Activated B cell treated with CpG ODN at 0.5 μM for 24 hours (primary cell): ENCODE measurements at regions of chr14 and their contacts with region 1.

Region 1: DNA sequence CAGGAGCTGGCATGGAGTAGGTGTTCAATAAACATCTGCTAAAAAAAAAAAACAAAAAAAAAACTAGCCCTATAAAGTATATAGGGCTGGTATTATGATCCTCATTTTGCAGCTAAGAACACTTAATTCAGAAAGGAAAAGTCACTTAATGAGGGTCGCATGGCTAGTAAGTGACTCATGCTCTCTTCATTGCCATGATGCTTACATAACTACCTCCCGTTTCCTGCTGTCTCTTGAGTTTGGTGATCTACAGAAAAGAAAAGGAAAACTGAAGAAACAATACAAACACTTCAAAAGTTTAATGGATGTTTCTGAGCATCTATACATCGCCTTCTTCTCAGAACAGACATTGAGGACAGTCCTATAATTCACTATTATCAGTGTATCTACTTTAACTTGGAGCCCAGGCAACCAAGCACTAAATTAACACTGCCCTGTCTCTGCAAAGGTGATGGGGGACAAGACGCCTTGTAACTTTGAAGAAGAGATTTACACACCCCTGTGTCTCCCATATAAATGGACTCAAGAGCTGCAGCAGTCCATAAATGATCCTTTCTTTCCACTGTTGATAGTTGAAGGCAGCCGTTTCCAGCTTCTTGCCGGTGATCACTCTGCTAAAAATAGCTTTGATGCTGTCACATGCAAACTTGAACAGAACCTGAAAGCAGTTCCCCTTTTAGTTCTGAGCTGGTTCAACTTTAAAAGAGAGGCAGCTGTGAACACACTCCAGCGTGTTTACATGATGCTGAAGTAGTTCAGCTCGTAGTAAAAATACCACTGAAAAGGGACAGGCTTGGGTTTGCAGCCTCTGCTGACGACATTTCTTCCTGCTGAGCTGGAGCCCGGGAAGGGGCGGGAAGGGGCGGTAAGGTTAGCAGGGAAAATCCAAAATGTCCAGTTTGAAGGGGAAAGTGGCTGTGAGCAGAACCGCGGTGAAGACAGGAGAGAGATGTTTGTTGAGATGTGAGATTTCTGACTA is 113.3 kb downstream of the FOXN3 start:
- DNase-seq: peak; percentile 57
- ATAC-seq: peak; percentile 63
- H3K4me3 Mint-ChIP-seq: peak overlapping the region; percentile 89
- H3K27ac Mint-ChIP-seq: peak overlapping the region; percentile 99
- H3K4me1 Mint-ChIP-seq: peaks cover 77% of the 10 kb centered on the region
- H3K27me3 Mint-ChIP-seq: no peaks in the 10 kb centered on the region
- CTCF ChIP-seq: no peak

Region 2: DNA sequence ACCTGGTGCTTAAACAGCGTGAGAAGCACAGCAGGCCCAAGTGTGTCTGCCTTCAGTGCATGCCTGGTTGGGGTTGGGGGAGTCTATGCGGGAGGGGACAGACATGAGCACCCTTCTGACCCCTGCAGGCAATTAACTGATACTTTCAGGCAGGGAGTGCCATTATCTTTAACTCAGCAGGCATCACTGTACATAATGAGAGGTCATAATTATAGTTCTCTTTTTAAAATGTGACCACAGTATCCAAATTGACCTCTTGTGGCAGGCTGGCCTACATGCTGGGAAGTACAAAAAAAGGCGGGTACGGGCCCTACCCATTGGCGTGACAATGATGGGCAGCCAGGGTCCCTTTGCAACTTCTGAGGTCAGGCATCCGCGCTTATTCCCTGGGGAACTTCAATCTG is 95.8 kb before region 1 on chr14:
- CTCF ChIA-PET with region 1: no interaction called
- POLR2A ChIA-PET with region 1: no interaction called
- intact Hi-C with region 1: no loop called
- DNase-seq: no peak
- ATAC-seq: peak; percentile 42
- H3K4me3 Mint-ChIP-seq: no peak overlapping the region
- H3K27ac Mint-ChIP-seq: no peak overlapping the region
- H3K4me1 Mint-ChIP-seq: peaks cover 26% of the 10 kb centered on the region
- H3K27me3 Mint-ChIP-seq: no peaks in the 10 kb centered on the region
- CTCF ChIP-seq: no peak

Region 3: GRCh38 chr14:89232265-89233070 is 71.3 kb before region 1 on chr14:
- CTCF ChIA-PET with region 1: no interaction called
- POLR2A ChIA-PET with region 1: no interaction called
- intact Hi-C with region 1: no loop called
- DNase-seq: no peak
- ATAC-seq: no peak
- H3K4me3 Mint-ChIP-seq: no peak overlapping the region
- H3K27ac Mint-ChIP-seq: no peak overlapping the region
- H3K4me1 Mint-ChIP-seq: peaks cover 21% of the 10 kb centered on the region
- H3K27me3 Mint-ChIP-seq: no peaks in the 10 kb centered on the region
- CTCF ChIP-seq: no peak

Region 4: DNA sequence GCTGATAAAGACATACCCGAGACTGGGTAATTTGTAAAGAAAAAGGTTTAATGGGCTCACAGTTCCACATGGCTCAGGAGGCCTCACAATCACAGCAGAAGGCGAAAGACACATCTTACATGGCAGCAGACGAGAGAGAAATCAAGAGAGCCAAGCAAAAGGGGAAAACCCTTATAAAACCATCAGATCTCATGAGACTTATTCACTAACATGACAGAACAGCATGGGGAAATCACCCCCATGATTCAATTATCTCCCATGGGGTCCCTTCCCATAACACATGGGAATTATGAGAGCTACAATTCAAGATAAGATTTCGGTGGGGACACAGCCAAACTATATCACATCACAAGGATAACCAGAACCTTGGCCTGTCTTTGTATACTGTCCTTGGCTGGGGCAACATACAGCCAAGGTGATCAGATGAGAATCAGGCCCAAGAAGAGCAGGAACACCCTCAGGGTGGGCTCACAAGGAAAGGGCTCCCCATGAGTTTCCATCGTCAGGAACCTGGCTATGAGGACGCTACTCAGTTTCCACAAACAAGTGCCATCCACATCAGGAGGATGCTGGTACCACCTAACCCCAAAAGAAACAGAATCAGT is 39.4 kb before region 1 on chr14:
- CTCF ChIA-PET with region 1: interaction called, 4 read pairs
- POLR2A ChIA-PET with region 1: interaction called, 20 read pairs
- intact Hi-C with region 1: loop called (anchors 1 kb)
- DNase-seq: no peak
- ATAC-seq: peak; percentile 90
- H3K4me3 Mint-ChIP-seq: peak overlapping the region; percentile 75
- H3K27ac Mint-ChIP-seq: peak overlapping the region; percentile 94
- H3K4me1 Mint-ChIP-seq: peaks cover 73% of the 10 kb centered on the region
- H3K27me3 Mint-ChIP-seq: no peaks in the 10 kb centered on the region
- CTCF ChIP-seq: no peak

Region 5: GRCh38 chr14:89336338-89336737 is 32.6 kb after region 1 on chr14:
- CTCF ChIA-PET with region 1: interaction called, 30 read pairs
- POLR2A ChIA-PET with region 1: interaction called, 6 read pairs
- intact Hi-C with region 1: loop called (anchors 1 kb)
- DNase-seq: no peak
- ATAC-seq: peak; percentile 69
- H3K4me3 Mint-ChIP-seq: no peak overlapping the region
- H3K27ac Mint-ChIP-seq: peak overlapping the region; percentile 66
- H3K4me1 Mint-ChIP-seq: peaks cover 71% of the 10 kb centered on the region
- H3K27me3 Mint-ChIP-seq: no peaks in the 10 kb centered on the region
- CTCF ChIP-seq: no peak

Region 6: GRCh38 chr14:89384023-89384422 is 80.3 kb after region 1 on chr14:
- CTCF ChIA-PET with region 1: interaction called, 5 read pairs
- POLR2A ChIA-PET with region 1: interaction called, 43 read pairs
- intact Hi-C with region 1: loop called (anchors 1 kb)
- DNase-seq: peak; percentile 79
- ATAC-seq: peak; percentile 95
- H3K4me3 Mint-ChIP-seq: peak overlapping the region; percentile 36
- H3K27ac Mint-ChIP-seq: peak overlapping the region; percentile 87
- H3K4me1 Mint-ChIP-seq: peaks cover 79% of the 10 kb centered on the region
- H3K27me3 Mint-ChIP-seq: no peaks in the 10 kb centered on the region
- CTCF ChIP-seq: no peak

Region 7: GRCh38 chr14:89618811-89619551 is 315.2 kb after region 1 on chr14:
- CTCF ChIA-PET with region 1: no interaction called
- POLR2A ChIA-PET with region 1: interaction called, 14 read pairs
- intact Hi-C with region 1: loop called (anchors 2 kb)
- DNase-seq: peak; percentile 69
- ATAC-seq: peak; percentile 73
- H3K4me3 Mint-ChIP-seq: peak overlapping the region; percentile 90
- H3K27ac Mint-ChIP-seq: peak overlapping the region; percentile 86
- H3K4me1 Mint-ChIP-seq: peaks cover 68% of the 10 kb centered on the region
- H3K27me3 Mint-ChIP-seq: no peaks in the 10 kb centered on the region
- CTCF ChIP-seq: no peak